Transverse colon (tissue), 4 donors: ENCODE measurements at regions of chrX and their contacts with region 1.

Region 1: GRCh38 chrX:19343535-19344408 is at the start of gene PDHA1:
- DNase-seq: peak; percentile 95
- H3K4me3 ChIP-seq: peak within 1 kb of the TSS; percentile 45 to 79 (median 62)
- H3K27ac ChIP-seq: peak within 1 kb of the TSS; percentile 85 to 97 (median 94)
- H3K4me1 ChIP-seq: peaks cover 0 to 22% (median 5%) of the 10 kb centered on the region in 4 donors
- H3K27me3 ChIP-seq: no peaks in the 10 kb centered on the region
- CTCF ChIP-seq: no peak
- EP300 ChIP-seq: no peak
- POLR2A ChIP-seq: peak; percentile 86
- total RNA-seq, gene PDHA1: 77.4 to 264 (median 189) TPM

Region 2: DNA sequence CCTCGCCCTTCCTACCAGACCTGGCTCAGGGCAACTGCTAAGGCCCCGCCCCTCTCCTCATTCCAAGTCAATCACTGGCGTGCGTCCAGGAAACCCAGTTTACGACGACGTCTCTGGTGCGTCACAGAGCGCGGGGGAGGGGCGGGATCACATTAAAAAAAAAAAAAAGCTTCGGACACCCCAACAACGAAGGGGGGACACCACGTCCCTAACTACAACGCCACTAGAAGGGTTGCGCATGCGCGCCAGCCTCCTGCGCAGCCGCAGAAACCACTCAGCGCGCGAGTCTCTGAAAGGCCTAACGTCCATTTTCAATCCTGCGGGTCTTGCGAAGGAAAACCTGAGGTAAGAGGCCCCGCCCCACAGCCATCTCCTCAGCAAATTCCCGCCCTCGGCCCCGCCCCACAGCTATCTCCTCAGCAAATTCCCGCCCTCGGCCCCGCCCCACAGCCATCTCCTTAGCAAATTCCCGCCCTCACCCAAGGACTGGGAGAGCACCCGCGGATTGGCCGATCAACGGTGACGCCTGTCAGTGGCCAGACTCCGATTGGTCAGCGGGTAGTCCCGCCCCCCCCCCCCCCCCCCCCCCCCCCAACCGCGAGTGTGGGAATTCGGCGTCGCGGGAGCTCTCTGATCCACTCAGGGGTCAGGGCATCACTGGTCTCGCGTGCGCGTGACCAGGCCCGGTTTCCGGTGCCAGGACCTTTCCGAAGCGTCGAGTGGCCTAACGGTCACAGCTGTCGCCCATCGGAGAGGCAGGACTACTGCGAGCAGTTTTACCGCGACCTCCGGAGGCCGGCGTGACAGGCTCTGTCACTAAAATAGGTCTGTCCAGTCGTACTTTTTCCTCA is 1606.7 kb before region 1 on chrX and contains the start of gene SCML1:
- in situ Hi-C with region 1: loop called in 1 of 4 experiments (anchors 25 kb)
- intact Hi-C with region 1: no loop called
- DNase-seq: peak; percentile 97
- H3K4me3 ChIP-seq: peak within 1 kb of the TSS; percentile 42 to 68 (median 54)
- H3K27ac ChIP-seq: peak within 1 kb of the TSS; percentile 91 to 96 (median 93)
- H3K4me1 ChIP-seq: peaks cover 0 to 4% (median 3%) of the 10 kb centered on the region in 4 donors
- H3K27me3 ChIP-seq: no peaks in the 10 kb centered on the region
- CTCF ChIP-seq: no peak
- EP300 ChIP-seq: no peak
- POLR2A ChIP-seq: peak; percentile 69
- total RNA-seq, gene SCML1: 9.7 to 21.1 (median 13.8) TPM

Region 3: DNA sequence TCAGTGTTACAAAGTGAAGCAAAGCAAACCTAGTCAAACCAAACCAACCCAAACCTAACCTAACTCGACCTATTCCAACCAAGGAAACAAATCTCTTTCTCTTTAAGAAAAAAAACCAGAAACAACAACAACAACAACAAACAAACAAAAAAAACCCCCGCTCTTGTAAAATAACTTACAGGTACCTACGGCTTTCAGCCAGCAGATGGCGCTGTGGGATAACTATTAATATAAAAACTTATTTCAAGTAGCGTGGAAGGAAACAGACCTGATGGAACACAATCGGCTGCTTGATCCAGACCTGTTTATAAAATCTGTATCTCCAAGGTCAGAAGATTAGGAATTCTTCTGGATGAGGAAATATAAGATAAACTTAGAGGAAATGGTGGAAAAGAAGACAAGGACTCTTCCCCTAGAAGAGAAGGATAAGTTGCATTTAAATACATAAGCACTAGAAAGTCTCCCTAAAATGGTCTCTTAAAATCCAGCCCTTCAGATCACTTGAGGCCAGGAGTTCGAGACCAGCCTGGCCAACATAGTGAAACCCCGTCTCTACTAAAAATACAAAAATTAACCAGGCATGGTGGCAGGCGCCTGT is 952.7 kb before region 1 on chrX:
- in situ Hi-C with region 1: loop called (anchors 5 to 25 kb)
- intact Hi-C with region 1: loop called (anchors 10 kb)
- DNase-seq: peak; percentile 67
- H3K4me3 ChIP-seq: no peak overlapping the region
- H3K27ac ChIP-seq: no peak overlapping the region
- H3K4me1 ChIP-seq: no peaks in the 10 kb centered on the region
- H3K27me3 ChIP-seq: no peaks in the 10 kb centered on the region
- CTCF ChIP-seq: peak; percentile 60 to 88 (median 74)
- EP300 ChIP-seq: no peak
- POLR2A ChIP-seq: no peak

Region 4: DNA sequence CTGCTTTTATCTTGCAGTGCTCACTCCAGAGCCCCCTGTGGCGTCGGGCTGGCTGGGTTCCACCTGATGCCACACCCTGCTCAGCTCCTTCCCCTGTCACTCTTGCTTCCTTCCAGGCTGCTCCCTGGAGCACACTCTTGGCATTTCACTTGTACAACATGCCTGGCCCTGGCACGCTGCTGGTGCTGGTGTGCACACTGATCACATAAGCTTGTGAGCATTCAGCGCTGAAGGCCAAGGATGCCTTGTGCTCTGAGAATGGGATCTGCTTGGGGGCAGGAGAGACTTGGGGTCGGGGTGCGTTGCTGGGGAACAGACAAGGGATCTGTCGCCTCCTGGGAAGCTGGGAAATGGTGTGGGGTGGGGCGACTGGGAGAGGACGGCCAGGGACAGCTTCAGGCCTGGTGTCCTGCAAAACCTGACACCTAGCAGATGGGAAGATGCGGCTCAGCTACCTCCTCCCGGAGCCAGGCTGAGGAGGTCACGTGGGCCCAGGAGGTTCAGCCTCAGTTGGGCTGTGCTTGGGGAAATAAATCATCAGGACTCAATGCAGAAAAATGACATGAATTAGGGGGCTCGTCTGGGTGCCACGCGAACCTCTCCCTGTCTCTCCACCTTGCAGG is 468.4 kb before region 1 on chrX:
- in situ Hi-C with region 1: no loop called
- intact Hi-C with region 1: loop called (anchors 5 kb)
- DNase-seq: no peak
- H3K4me3 ChIP-seq: no peak overlapping the region
- H3K27ac ChIP-seq: no peak overlapping the region
- H3K4me1 ChIP-seq: peaks cover 0 to 11% (median 1%) of the 10 kb centered on the region in 4 donors
- H3K27me3 ChIP-seq: no peaks in the 10 kb centered on the region
- CTCF ChIP-seq: no peak
- EP300 ChIP-seq: no peak
- POLR2A ChIP-seq: no peak

Region 5: GRCh38 chrX:18899796-18900447 is 443.9 kb before region 1 on chrX:
- in situ Hi-C with region 1: loop called in 1 of 4 experiments (anchors 25 kb)
- intact Hi-C with region 1: no loop called
- DNase-seq: no peak
- H3K4me3 ChIP-seq: no peak overlapping the region
- H3K27ac ChIP-seq: no peak overlapping the region
- H3K4me1 ChIP-seq: no peaks in the 10 kb centered on the region
- H3K27me3 ChIP-seq: no peaks in the 10 kb centered on the region
- CTCF ChIP-seq: peak in 1 of 5 experiments; percentile 14
- EP300 ChIP-seq: no peak
- POLR2A ChIP-seq: no peak

Region 6: GRCh38 chrX:18984381-18985185 is 359.2 kb before region 1 on chrX:
- in situ Hi-C with region 1: loop called in 1 of 4 experiments (anchors 25 kb)
- intact Hi-C with region 1: no loop called
- DNase-seq: peak; percentile 86
- H3K4me3 ChIP-seq: peak overlapping the region; percentile 27 to 84 (median 68)
- H3K27ac ChIP-seq: peak overlapping the region; percentile 88 to 96 (median 92)
- H3K4me1 ChIP-seq: peaks cover 0 to 10% (median 8%) of the 10 kb centered on the region in 4 donors
- H3K27me3 ChIP-seq: no peaks in the 10 kb centered on the region
- CTCF ChIP-seq: peak; percentile 43 to 84 (median 55)
- EP300 ChIP-seq: no peak
- POLR2A ChIP-seq: peak; percentile 47

Region 7: DNA sequence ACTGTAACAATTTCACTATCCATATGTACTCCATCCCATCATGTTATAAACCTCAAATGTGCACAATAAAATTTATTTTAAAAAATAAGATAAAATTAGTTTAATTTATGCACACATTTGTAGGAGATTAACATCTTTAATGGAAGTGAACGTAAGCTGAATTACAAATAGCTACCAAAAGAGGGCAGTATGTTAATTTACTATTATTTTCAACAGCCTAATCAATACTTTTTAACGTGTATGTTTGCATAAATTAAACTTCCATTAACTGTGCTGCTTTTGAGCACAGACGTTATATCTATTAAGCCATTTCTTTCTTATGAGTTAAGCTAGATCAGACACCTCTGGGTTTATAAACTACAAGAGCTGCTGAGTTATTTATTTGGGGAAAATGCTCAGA is 303.4 kb before region 1 on chrX:
- in situ Hi-C with region 1: loop called in 1 of 4 experiments (anchors 25 kb)
- intact Hi-C with region 1: no loop called
- DNase-seq: no peak
- H3K4me3 ChIP-seq: no peak overlapping the region
- H3K27ac ChIP-seq: no peak overlapping the region
- H3K4me1 ChIP-seq: no peaks in the 10 kb centered on the region
- H3K27me3 ChIP-seq: no peaks in the 10 kb centered on the region
- CTCF ChIP-seq: no peak
- EP300 ChIP-seq: no peak
- POLR2A ChIP-seq: no peak

Region 8: DNA sequence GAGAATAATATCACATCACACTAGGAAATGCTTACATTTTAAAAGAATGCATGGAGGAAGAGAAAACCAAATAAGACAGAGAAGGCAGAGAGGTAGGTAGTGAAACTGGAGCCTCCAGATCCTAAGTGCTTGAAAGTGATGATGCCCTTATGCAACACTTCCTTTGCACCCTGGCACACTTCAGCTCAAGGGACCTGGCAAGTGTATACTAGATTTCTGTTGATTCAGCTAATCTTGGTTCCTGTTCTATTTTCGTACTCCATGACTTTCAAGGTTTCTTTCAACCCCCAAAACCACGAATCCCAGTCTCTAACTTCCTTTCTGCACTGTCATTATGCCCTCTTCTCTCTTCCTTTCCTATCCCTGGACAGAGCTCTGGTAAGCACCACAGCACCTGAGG is 580.5 kb after region 1 on chrX:
- in situ Hi-C with region 1: no loop called
- intact Hi-C with region 1: no loop called
- DNase-seq: no peak
- H3K4me3 ChIP-seq: no peak overlapping the region
- H3K27ac ChIP-seq: no peak overlapping the region
- H3K4me1 ChIP-seq: no peaks in the 10 kb centered on the region
- H3K27me3 ChIP-seq: no peaks in the 10 kb centered on the region
- CTCF ChIP-seq: no peak
- EP300 ChIP-seq: no peak
- POLR2A ChIP-seq: no peak